Activated CD8-positive, alpha-beta T cell treated with anti-CD3 and anti-CD28 coated beads, Interleukin-2, amount 10 ng/mL, durations not matched to agents 7 days and 5 days (primary cell): ENCODE measurements at regions of chr20 and their contacts with region 1.

Region 1: GRCh38 chr20:46013826-46014516 is 5.3 kb downstream of the MMP9 start:
- DNase-seq: peak; percentile 78
- ATAC-seq: peak; percentile 94
- H3K4me3 Mint-ChIP-seq: no peak overlapping the region
- H3K27ac Mint-ChIP-seq: no peak overlapping the region
- H3K4me1 Mint-ChIP-seq: peaks cover 46% of the 10 kb centered on the region
- H3K27me3 Mint-ChIP-seq: peaks cover 59% of the 10 kb centered on the region

Region 2: DNA sequence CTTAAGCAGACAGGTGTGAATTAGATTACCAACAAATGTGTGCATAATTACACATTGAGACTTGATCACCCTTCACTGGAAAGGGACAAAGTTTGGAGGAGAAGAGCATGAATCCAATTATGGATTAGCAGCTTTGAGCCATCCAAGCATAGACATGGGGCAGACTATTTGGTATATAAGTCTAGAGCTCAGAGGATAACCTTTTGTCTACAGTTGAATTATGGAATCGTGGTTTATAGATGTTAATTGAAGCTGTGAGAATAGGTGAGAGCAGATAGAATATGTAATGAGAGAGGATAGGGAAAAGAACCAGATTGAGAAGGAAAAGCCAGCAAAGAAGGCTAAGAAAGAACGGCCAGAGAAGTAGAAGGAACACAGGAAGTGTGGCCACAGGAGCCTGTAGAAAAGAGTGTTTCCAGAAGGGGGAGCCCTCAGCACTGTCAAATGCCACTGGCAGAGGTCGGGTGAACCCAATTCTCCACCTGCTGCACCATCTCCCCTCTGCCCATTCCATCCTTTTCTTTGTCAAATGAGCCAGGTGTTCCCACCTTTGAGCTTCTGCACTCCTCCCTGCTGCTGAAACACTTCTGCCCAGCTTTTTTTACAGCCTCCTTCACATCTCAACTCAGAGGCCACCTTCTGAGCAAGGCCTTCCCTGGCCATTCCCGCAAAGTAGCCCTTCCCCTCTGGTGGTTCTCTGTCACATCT is 214.9 kb before region 1 on chr20:
- CTCF ChIA-PET with region 1: interaction called, 14 read pairs
- POLR2A ChIA-PET with region 1: no interaction called
- DNase-seq: peak; percentile 82
- ATAC-seq: peak; percentile 94
- H3K4me3 Mint-ChIP-seq: no peak overlapping the region
- H3K27ac Mint-ChIP-seq: peak overlapping the region; percentile 77
- H3K4me1 Mint-ChIP-seq: peaks cover 12% of the 10 kb centered on the region
- H3K27me3 Mint-ChIP-seq: no peaks in the 10 kb centered on the region

Region 3: GRCh38 chr20:45987108-45987780 is 26.7 kb before region 1 on chr20:
- CTCF ChIA-PET with region 1: interaction called, 138 read pairs
- POLR2A ChIA-PET with region 1: no interaction called
- DNase-seq: peak; percentile 84
- ATAC-seq: peak; percentile 99
- H3K4me3 Mint-ChIP-seq: no peak overlapping the region
- H3K27ac Mint-ChIP-seq: no peak overlapping the region
- H3K4me1 Mint-ChIP-seq: peaks cover 11% of the 10 kb centered on the region
- H3K27me3 Mint-ChIP-seq: peaks cover 28% of the 10 kb centered on the region

Region 4: DNA sequence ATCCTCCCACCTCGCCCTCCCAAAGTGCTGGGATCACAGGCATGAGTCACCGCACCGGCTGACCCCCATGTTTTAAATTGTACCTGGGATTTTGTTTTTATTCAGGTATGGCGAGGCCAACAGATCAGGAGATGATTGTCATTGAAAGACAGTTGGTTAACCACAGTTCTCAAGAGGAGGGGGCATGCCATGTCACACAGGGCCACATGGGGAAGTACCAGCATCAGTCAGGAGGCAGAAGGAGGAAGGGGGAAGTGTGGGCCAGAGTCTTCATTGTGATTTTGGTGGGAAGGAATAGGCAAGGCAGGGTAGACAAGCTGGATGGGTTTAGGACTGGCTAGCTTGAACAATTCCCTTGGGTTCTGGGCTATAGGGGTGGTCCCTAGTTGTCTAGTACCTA is 15.2 kb before region 1 on chr20:
- CTCF ChIA-PET with region 1: interaction called, 41 read pairs
- POLR2A ChIA-PET with region 1: no interaction called
- DNase-seq: peak; percentile 38
- ATAC-seq: peak; percentile 61
- H3K4me3 Mint-ChIP-seq: no peak overlapping the region
- H3K27ac Mint-ChIP-seq: peak overlapping the region; percentile 0
- H3K4me1 Mint-ChIP-seq: peaks cover 62% of the 10 kb centered on the region
- H3K27me3 Mint-ChIP-seq: peaks cover 15% of the 10 kb centered on the region

Region 5: GRCh38 chr20:46089417-46090388 is 75.7 kb after region 1 on chr20 and contains the start of gene NCOA5:
- CTCF ChIA-PET with region 1: interaction called, 22 read pairs
- POLR2A ChIA-PET with region 1: interaction called, 3 read pairs
- DNase-seq: peak; percentile 96
- ATAC-seq: peak; percentile 91
- H3K4me3 Mint-ChIP-seq: peak within 1 kb of the TSS; percentile 78
- H3K27ac Mint-ChIP-seq: peak within 1 kb of the TSS; percentile 86
- H3K4me1 Mint-ChIP-seq: peaks cover 40% of the 10 kb centered on the region
- H3K27me3 Mint-ChIP-seq: no peaks in the 10 kb centered on the region
- total RNA-seq, gene NCOA5: 30.3 to 30.9 TPM

Region 6: GRCh38 chr20:46174469-46175128 is 160.6 kb after region 1 on chr20:
- CTCF ChIA-PET with region 1: interaction called, 11 read pairs
- POLR2A ChIA-PET with region 1: no interaction called
- DNase-seq: peak; percentile 77
- ATAC-seq: peak; percentile 97
- H3K4me3 Mint-ChIP-seq: no peak overlapping the region
- H3K27ac Mint-ChIP-seq: no peak overlapping the region
- H3K4me1 Mint-ChIP-seq: no peaks in the 10 kb centered on the region
- H3K27me3 Mint-ChIP-seq: peaks cover 37% of the 10 kb centered on the region